HCT116 (cell line): ENCODE measurements at regions of chr6 and their contacts with region 1.

Region 1: DNA sequence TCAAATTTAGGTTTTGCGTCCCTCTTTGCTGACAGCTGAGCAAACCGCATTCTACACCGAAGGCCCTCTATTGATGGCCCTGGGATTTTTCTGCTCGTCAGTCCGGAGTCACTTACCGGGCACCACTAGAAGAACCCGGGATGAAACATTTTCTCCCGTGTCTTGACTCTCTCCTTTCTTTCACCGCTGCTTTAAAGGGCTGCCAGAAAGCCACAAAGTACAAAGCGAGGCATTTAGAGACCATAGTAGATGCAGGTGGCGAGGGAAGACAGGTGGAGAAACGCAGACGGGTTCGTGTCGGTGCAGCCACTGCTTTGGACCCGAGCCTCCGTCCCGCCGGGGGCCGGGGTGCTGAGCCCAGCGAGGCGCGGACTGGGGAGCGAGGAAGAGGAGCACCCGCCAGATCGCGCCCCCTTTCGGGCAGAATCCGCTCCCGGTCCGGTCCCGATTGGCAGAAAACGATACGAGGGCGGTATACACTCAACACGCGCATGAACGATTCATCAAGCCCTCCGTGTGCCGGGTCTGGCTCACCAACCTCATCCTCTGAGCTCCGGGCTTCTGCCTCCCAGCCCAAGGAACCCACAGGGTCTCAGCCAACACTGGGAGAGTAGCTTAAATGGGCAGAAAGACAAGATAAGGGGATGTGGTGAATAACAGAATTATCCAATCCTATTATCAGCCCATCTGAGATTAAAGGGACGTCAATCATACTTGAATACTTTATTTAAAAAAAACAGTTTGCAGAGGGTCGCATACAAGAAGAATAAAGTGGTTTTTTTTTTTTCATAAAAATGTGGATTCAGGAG is 84.9 kb downstream of the TRIM27 start:
- DNase-seq: peak; percentile 75
- ATAC-seq: peak; percentile 84
- H3K4me3 ChIP-seq: peak overlapping the region; percentile 55 to 67
- H3K27ac ChIP-seq: peak overlapping the region; percentile 67
- H3K4me1 ChIP-seq: peaks cover 3 to 19% of the 10 kb centered on the region in 2 experiments; a peak in 3 of 4 replicates
- H3K27me3 ChIP-seq: no peaks in the 10 kb centered on the region
- CTCF ChIP-seq: peak; percentile 46 to 67 (median 65); a peak in 5 of 6 replicates
- POLR2A ChIP-seq: peak; percentile 45
- RAD21 ChIP-seq: peak; percentile 55

Region 2: GRCh38 chr6:28895134-28895812 is 56.4 kb after region 1 on chr6:
- CTCF ChIA-PET with region 1: interaction called, 10 read pairs
- POLR2A ChIA-PET with region 1: interaction called, 14 read pairs
- RAD21 ChIA-PET with region 1: interaction called in 1 of 2 experiments, 3 read pairs
- intact Hi-C with region 1: loop called (anchors 1 kb)
- DNase-seq: peak; percentile 95
- ATAC-seq: peak; percentile 75
- H3K4me3 ChIP-seq: peak overlapping the region; percentile 61 to 66
- H3K27ac ChIP-seq: peak overlapping the region; percentile 85
- H3K4me1 ChIP-seq: peaks cover 11 to 37% of the 10 kb centered on the region in 2 experiments; a peak in 3 of 4 replicates
- H3K27me3 ChIP-seq: no peaks in the 10 kb centered on the region
- CTCF ChIP-seq: no peak
- POLR2A ChIP-seq: peak; percentile 69
- RAD21 ChIP-seq: no peak

Region 3: GRCh38 chr6:28907394-28907793 is 68.6 kb after region 1 on chr6:
- CTCF ChIA-PET with region 1: no interaction called
- POLR2A ChIA-PET with region 1: no interaction called
- RAD21 ChIA-PET with region 1: no interaction called
- intact Hi-C with region 1: no loop called
- DNase-seq: no peak
- ATAC-seq: no peak
- H3K4me3 ChIP-seq: no peak overlapping the region
- H3K27ac ChIP-seq: no peak overlapping the region
- H3K4me1 ChIP-seq: no peaks in the 10 kb centered on the region
- H3K27me3 ChIP-seq: no peaks in the 10 kb centered on the region
- CTCF ChIP-seq: no peak
- POLR2A ChIP-seq: no peak
- RAD21 ChIP-seq: no peak

Region 4: GRCh38 chr6:28988536-28989311 is 149.9 kb after region 1 on chr6:
- CTCF ChIA-PET with region 1: interaction called, 6 read pairs
- POLR2A ChIA-PET with region 1: interaction called, 3 read pairs
- RAD21 ChIA-PET with region 1: interaction called in 1 of 2 experiments, 3 read pairs
- intact Hi-C with region 1: loop called (anchors 1 kb)
- DNase-seq: peak; percentile 73
- ATAC-seq: peak; percentile 68
- H3K4me3 ChIP-seq: peak overlapping the region; percentile 35 to 43
- H3K27ac ChIP-seq: peak overlapping the region; percentile 25
- H3K4me1 ChIP-seq: peaks cover 10 to 35% of the 10 kb centered on the region in 2 experiments; a peak in 3 of 4 replicates
- H3K27me3 ChIP-seq: no peaks in the 10 kb centered on the region
- CTCF ChIP-seq: peak; percentile 60 to 69 (median 67); a peak in 5 of 6 replicates
- POLR2A ChIP-seq: no peak
- RAD21 ChIP-seq: peak; percentile 71

Region 5: DNA sequence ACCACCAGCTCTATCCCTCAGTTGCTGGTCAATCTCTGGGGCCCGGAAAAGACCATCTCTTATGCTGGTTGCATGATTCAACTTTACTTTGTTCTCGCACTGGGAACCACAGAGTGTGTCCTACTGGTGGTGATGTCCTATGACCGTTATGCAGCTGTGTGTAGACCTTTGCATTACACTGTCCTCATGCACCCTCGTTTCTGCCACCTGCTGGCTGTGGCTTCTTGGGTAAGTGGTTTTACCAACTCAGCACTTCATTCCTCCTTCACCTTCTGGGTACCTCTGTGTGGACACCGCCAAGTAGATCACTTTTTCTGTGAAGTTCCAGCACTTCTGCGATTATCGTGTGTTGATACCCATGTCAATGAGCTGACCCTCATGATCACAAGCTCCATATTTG is 273.3 kb after region 1 on chr6:
- CTCF ChIA-PET with region 1: no interaction called
- POLR2A ChIA-PET with region 1: no interaction called
- RAD21 ChIA-PET with region 1: no interaction called
- intact Hi-C with region 1: loop called (anchors 5 kb)
- DNase-seq: peak; percentile 27
- ATAC-seq: peak; percentile 97
- H3K4me3 ChIP-seq: no peak overlapping the region
- H3K27ac ChIP-seq: no peak overlapping the region
- H3K4me1 ChIP-seq: no peaks in the 10 kb centered on the region
- H3K27me3 ChIP-seq: no peaks in the 10 kb centered on the region; the same call in 1 of the 2 replicates
- CTCF ChIP-seq: peak in 2 of 3 experiments; percentile 40 to 49; a peak in 4 of 6 replicates
- POLR2A ChIP-seq: no peak
- RAD21 ChIP-seq: peak; percentile 26; the same call in 1 of the 2 replicates